ENCODE measurements at regions of chr6 and their contacts with region 1.

Region 1: GRCh38 chr6:36678518-36679027 is at the start of gene CDKN1A:
- DNase-seq: peak; percentile 85 to 93
- ATAC-seq: peak; percentile 82 to 91 (median 82)
- H3K4me3 ChIP-seq: peak within 1 kb of the TSS; percentile 64 to 89 (median 75)
- H3K27ac ChIP-seq: peak within 1 kb of the TSS; percentile 97 to 100 (median 99)
- H3K4me1 ChIP-seq: peaks cover 9 to 68% (median 45%) of the 10 kb centered on the region in 9 donors
- H3K27me3 ChIP-seq: no peaks in the 10 kb centered on the region
- CTCF ChIP-seq: peak in 5 of 9 donors; percentile 8 to 27 (median 13)
- total RNA-seq, gene CDKN1A: 27.1 to 105 (median 61.2) TPM

Region 2: GRCh38 chr6:36423101-36423824 is 255.3 kb before region 1 on chr6:
- intact Hi-C with region 1: loop called in 3 of 10 experiments (anchors 1 to 10 kb)
- DNase-seq: peak; percentile 98 to 99
- ATAC-seq: peak; percentile 100
- H3K4me3 ChIP-seq: peak overlapping the region; percentile 15 to 67 (median 57)
- H3K27ac ChIP-seq: peak overlapping the region; percentile 3 to 85 (median 68)
- H3K4me1 ChIP-seq: peaks cover 0 to 15% (median 8%) of the 10 kb centered on the region in 9 donors
- H3K27me3 ChIP-seq: no peaks in the 10 kb centered on the region
- CTCF ChIP-seq: peak in 8 of 9 donors; percentile 58 to 81 (median 66)

Region 3: DNA sequence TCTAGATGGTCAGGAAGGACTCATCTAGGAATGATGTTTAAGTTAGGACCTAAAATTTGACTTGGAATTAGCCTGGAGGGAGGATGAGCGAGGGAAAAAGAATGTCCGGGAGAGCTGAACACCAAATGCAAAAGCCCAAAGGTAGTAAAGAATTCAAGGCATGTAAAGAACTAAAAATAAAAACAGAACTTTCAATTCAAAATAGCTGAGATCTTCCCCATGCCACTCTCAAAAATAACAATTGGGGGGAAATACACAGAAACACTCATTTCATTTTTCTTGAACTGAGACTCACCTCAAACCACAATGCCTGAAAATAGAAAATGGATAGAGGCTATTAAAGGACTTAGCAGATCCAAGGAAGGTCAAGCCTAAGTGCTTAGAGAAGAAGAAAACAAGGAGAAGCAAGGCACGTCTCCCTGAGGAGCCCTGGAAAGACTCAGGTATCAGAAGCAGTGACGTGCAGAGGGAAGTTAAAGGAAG is 246.4 kb before region 1 on chr6:
- intact Hi-C with region 1: loop called in 2 of 10 experiments (anchors 10 kb)
- DNase-seq: no peak
- ATAC-seq: no peak
- H3K4me3 ChIP-seq: no peak overlapping the region
- H3K27ac ChIP-seq: no peak overlapping the region
- H3K4me1 ChIP-seq: no peaks in the 10 kb centered on the region
- H3K27me3 ChIP-seq: no peaks in the 10 kb centered on the region
- CTCF ChIP-seq: no peak

Region 4: DNA sequence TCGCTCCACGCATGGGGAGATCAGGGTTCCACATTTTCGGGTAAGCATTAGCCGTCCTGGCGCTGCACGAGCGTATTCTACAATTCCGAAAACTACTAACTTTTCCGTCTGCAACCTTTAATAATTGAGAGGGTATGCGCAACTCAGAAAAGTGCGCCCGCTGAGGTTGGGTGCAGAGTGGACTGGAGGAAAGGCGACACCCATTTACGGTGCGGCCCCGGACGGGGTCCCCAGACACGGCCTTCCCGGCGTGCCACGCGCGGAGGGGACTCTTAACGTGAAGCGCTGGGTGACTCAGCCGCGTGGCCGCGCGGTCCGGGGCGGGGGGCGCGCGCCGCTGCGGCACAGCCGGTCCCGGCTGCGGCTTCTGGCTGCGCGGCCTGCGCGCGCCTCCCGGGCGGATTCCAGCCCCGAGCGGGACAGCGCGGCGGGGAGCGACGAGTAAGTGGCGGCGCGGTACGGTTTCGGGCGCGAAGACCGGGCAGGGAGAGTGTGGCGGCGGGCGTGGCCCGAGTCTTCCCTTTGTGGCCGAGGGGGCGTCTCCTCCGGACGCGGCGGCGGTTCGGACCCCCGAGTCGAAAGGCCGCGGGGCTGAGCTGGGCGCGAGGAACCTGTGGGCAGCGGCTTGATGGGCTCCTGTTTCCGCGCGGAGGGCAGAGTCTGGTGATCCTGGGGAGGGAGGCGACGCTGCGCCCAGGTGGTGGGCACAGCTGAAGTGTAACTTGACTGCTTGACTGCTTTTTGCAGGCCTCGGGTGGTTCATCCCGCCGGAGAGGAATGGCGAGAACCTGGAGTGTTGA is 235.7 kb before region 1 on chr6 and contains the starts of genes KCTD20 and PXT1:
- intact Hi-C with region 1: loop called in 3 of 10 experiments (anchors 1 to 10 kb)
- DNase-seq: peak; percentile 89 to 91
- ATAC-seq: peak; percentile 88 to 96 (median 93)
- H3K4me3 ChIP-seq: peak within 1 kb of the TSS; percentile 74 to 98 (median 94)
- H3K27ac ChIP-seq: peak within 1 kb of the TSS; percentile 96 to 100 (median 98)
- H3K4me1 ChIP-seq: peaks cover 8 to 51% (median 42%) of the 10 kb centered on the region in 9 donors
- H3K27me3 ChIP-seq: no peaks in the 10 kb centered on the region
- CTCF ChIP-seq: peak in 1 of 9 donors; percentile 2
- total RNA-seq, gene KCTD20: 21.4 to 36.6 (median 26.1) TPM
- total RNA-seq, gene PXT1: 0.18 to 0.34 (median 0.23) TPM in 5 of 10 donors, not detected in the others

Region 5: DNA sequence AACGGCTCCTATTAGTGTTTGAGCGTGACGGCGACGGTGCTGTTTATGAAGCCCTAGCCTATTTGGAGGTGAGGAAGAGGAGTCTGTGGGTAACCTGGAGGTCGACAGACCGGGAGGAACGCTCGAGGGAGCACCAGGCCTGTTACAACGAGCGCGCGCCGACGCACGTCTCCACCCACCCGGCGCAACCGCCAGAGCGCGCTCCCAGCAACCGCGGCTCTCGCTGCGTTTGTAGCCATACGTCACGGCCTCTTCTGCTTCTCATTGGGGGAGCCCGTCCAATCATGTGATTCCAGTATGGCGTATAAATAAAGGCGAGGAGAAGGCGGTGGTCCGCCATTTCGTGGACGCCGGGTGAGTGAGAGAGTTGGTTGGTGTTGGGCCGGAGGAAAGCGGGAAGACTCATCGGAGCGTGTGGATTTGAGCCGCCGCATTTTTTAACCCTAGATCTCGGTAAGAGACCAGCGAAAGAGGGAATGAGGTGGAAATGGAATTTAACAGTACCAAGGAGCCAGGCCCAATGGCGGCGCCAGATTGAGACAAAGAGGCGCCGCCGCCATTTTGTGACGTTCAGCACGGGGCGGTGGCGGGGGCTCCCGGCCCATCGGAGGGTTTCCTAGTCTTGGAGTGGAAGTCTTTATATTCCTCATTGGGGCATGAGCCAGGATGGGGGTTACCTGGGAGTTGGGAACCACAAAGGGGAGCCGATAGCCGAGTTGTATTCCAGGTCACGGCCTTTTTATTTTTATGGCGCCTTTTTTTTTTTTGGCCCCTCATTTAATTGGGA is 84.4 kb before region 1 on chr6 and contains the start of gene SRSF3:
- intact Hi-C with region 1: loop called in 1 of 10 experiments (anchors 1 kb)
- DNase-seq: peak; percentile 96 to 97
- ATAC-seq: peak; percentile 97 to 98 (median 98)
- H3K4me3 ChIP-seq: peak within 1 kb of the TSS; percentile 48 to 89 (median 73)
- H3K27ac ChIP-seq: peak within 1 kb of the TSS; percentile 89 to 99 (median 98)
- H3K4me1 ChIP-seq: peaks cover 13 to 44% (median 37%) of the 10 kb centered on the region in 9 donors
- H3K27me3 ChIP-seq: no peaks in the 10 kb centered on the region
- CTCF ChIP-seq: peak; percentile 36 to 81 (median 62)
- total RNA-seq, gene SRSF3: 105 to 196 (median 131) TPM

Region 6: GRCh38 chr6:36623547-36624459 is 54.8 kb before region 1 on chr6:
- intact Hi-C with region 1: loop called in 9 of 10 experiments (anchors 1 to 5 kb)
- DNase-seq: peak; percentile 82 to 91
- ATAC-seq: peak; percentile 63 to 75 (median 70)
- H3K4me3 ChIP-seq: no peak overlapping the region
- H3K27ac ChIP-seq: peak overlapping the region in 1 of 10 donors; percentile 29
- H3K4me1 ChIP-seq: peaks cover 0 to 71% (median 52%) of the 10 kb centered on the region in 9 donors
- H3K27me3 ChIP-seq: no peaks in the 10 kb centered on the region
- CTCF ChIP-seq: peak; percentile 66 to 93 (median 87)

Region 7: DNA sequence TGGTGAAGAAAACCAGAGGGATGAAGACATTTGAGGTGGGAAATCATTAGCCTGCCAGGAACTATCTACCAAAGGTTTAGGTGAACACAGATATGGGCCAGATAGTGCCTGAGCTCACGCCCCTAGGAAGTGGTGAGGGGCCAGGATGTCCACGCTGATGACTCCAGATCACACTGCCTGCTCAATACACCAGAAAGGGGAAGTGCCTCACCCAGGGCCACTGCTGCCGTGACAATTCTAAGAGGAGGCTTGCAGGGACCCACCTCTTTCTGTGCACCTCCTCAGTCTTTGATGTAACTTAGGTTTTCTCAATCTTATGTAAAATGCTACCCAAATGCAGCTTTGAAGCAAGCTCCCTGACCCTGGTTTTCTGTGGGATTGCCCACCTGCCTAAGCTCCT is 13.6 kb after region 1 on chr6:
- intact Hi-C with region 1: no loop called
- DNase-seq: no peak
- ATAC-seq: peak in 3 of 8 donors; percentile 28 to 44 (median 36)
- H3K4me3 ChIP-seq: no peak overlapping the region
- H3K27ac ChIP-seq: peak overlapping the region in 1 of 10 donors; percentile 27
- H3K4me1 ChIP-seq: peaks cover 0 to 23% (median 14%) of the 10 kb centered on the region in 9 donors
- H3K27me3 ChIP-seq: no peaks in the 10 kb centered on the region
- CTCF ChIP-seq: no peak

Region 8: GRCh38 chr6:36759148-36759759 is 80.7 kb after region 1 on chr6:
- intact Hi-C with region 1: loop called in 3 of 10 experiments (anchors 5 to 10 kb)
- DNase-seq: peak; percentile 80 to 85
- ATAC-seq: peak; percentile 80 to 91 (median 86)
- H3K4me3 ChIP-seq: no peak overlapping the region
- H3K27ac ChIP-seq: no peak overlapping the region
- H3K4me1 ChIP-seq: peaks cover 0 to 43% (median 14%) of the 10 kb centered on the region in 9 donors
- H3K27me3 ChIP-seq: no peaks in the 10 kb centered on the region
- CTCF ChIP-seq: peak; percentile 93 to 98 (median 96)